SK-N-SH (cell line): ENCODE measurements at regions of chr20 and their contacts with region 1.

Region 1: GRCh38 chr20:46423882-46424482 is 17.6 kb upstream of the ELMO2 start:
- DNase-seq: no peak
- H3K4me3 ChIP-seq: no peak overlapping the region
- H3K27ac ChIP-seq: no peak overlapping the region
- H3K4me1 ChIP-seq: no peaks in the 10 kb centered on the region
- H3K27me3 ChIP-seq: no peaks in the 10 kb centered on the region; the same call in 1 of the 2 replicates
- CTCF ChIP-seq: no peak
- EP300 ChIP-seq: no peak
- RAD21 ChIP-seq: no peak

Region 2: GRCh38 chr20:46438156-46438750 is 14.3 kb after region 1 on chr20:
- CTCF ChIA-PET with region 1: interaction called, 27 read pairs
- POLR2A ChIA-PET with region 1: no interaction called
- DNase-seq: peak; percentile 65
- H3K4me3 ChIP-seq: no peak overlapping the region
- H3K27ac ChIP-seq: no peak overlapping the region
- H3K4me1 ChIP-seq: peaks cover 0 to 10% of the 10 kb centered on the region in 2 experiments; a peak in 1 of 4 replicates
- H3K27me3 ChIP-seq: no peaks in the 10 kb centered on the region
- CTCF ChIP-seq: peak; percentile 45
- EP300 ChIP-seq: no peak
- RAD21 ChIP-seq: peak; percentile 84